ENCODE measurements at regions of chr11 and their contacts with region 1.

Region 1: DNA sequence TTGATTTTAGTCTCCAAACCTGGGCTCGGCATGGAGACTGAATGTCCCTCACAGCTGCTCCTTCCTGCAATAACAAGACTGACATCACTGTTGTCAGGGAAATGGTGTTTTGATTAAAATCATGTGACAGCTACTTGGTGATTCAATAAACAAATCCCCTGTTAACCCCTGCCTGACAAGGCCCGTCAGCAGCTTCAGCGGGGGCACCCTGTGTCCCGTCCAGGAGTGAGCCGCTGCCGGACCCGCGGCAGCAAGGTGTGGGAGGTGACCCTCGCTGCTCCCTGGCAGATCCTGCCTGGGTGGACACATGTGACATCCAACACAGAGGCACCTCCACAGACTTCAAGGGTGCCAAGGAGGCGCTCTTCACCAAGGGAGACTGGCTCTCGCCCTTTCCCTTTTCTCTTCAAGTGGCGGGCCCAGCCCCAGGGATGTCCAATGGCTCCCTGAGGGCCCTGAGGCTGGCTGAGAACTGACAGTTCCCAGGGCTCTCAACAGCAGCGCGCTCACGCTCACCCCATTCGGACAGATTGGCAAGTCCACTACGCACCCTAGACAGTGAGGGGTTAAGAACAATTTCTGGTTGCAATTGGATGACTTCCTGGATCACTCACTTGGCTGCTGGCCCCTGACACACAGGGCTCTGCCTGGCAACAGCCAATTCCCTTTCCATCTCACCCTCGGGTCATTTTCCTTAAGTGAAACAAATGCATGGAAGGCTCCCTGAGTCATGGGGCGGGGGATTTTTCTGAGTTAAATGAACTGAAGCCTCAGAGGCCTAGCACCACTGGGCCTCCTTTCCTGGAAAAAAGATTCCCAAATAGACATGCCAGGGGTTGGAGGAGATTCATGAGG is 30.7 kb downstream of the PPP2R1B start:
- DNase-seq: peak; percentile 99
- ATAC-seq: peak; percentile 73
- H3K4me3 ChIP-seq: peak overlapping the region; percentile 55
- H3K27ac ChIP-seq: peak overlapping the region; percentile 96
- H3K4me1 ChIP-seq: peaks cover 39% of the 10 kb centered on the region
- H3K27me3 ChIP-seq: no peaks in the 10 kb centered on the region
- CTCF ChIP-seq: peak; percentile 51; the same call in 1 of the 2 replicates

Region 2: GRCh38 chr11:111718436-111718835 is 17.1 kb before region 1 on chr11:
- CTCF ChIA-PET with region 1: interaction called, 4 read pairs
- POLR2A ChIA-PET with region 1: no interaction called
- intact Hi-C with region 1: loop called (anchors 1 kb)
- DNase-seq: peak; percentile 98
- ATAC-seq: peak; percentile 96
- H3K4me3 ChIP-seq: peak overlapping the region; percentile 20
- H3K27ac ChIP-seq: peak overlapping the region; percentile 81
- H3K4me1 ChIP-seq: peaks cover 21% of the 10 kb centered on the region
- H3K27me3 ChIP-seq: no peaks in the 10 kb centered on the region
- CTCF ChIP-seq: no peak; the same call in 1 of the 2 replicates

Region 3: DNA sequence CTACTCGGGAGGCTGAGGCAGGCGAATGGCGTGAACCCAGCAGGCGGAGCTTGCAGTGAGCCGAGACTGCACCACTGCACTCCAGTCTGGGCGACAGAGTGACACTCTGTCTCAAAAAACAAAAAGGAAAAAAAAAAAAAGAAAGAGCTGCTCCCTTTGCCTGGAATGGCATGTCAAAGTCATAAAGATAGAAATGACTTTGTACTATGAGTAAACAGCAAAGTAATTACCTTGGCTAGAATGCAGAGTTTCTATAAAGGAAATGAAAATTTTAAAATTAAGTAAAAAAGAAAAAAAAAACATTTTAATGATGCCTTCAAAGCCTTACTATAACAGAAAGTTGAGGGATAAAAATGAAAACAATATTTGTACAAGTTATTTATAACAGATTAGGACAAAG is 20.6 kb after region 1 on chr11:
- CTCF ChIA-PET with region 1: no interaction called
- POLR2A ChIA-PET with region 1: no interaction called
- intact Hi-C with region 1: no loop called
- DNase-seq: no peak
- ATAC-seq: no peak
- H3K4me3 ChIP-seq: no peak overlapping the region
- H3K27ac ChIP-seq: no peak overlapping the region
- H3K4me1 ChIP-seq: no peaks in the 10 kb centered on the region
- H3K27me3 ChIP-seq: no peaks in the 10 kb centered on the region
- CTCF ChIP-seq: no peak

Region 4: DNA sequence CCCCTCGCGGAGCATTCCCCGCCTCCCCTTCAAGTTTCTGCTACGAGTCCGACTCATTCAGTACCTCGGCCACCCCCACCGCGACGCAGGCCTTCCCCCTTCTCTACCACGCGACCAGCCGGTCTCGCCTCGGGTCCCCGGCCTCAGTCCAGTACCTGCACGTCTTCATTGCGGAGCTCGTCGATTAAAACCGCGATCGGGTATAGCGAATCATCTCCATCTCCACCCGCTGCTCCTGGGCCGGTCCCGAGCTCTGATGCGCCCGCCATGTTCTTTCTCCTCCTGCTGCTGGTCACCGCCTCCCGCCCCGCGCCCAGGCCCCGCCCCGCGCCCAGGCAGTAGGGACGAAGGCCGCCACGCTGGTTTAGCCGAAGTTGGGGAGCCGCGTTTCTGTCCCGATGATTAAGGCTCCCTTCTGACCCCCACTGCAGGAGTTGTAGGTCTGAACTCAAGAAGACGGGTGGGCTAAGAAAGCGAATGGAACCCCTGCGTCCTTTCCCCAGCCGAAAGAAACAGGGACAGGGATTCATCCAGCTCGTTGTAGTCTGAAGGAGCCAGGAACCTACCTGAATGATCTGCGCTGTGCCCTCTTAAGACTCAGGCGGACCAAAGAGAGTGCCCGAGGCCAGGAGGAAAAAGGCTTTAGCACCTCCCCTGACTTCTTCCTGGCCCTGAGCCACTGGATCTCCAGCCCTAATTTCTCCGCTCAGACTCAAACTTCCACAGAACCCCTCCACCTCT is 30.8 kb after region 1 on chr11 and contains the start of gene PPP2R1B:
- CTCF ChIA-PET with region 1: interaction called, 4 read pairs
- POLR2A ChIA-PET with region 1: interaction called, 4 read pairs
- intact Hi-C with region 1: loop called (anchors 1 kb)
- DNase-seq: peak; percentile 83
- ATAC-seq: peak; percentile 82
- H3K4me3 ChIP-seq: peak within 1 kb of the TSS; percentile 74
- H3K27ac ChIP-seq: peak within 1 kb of the TSS; percentile 74
- H3K4me1 ChIP-seq: peaks cover 25% of the 10 kb centered on the region
- H3K27me3 ChIP-seq: no peaks in the 10 kb centered on the region
- CTCF ChIP-seq: no peak
- total RNA-seq, gene PPP2R1B: 31.3 and 41.5 TPM in 2 replicates